Mammary epithelial cell (primary cell): ENCODE measurements at regions of chr12 and their contacts with region 1.

Region 1: DNA sequence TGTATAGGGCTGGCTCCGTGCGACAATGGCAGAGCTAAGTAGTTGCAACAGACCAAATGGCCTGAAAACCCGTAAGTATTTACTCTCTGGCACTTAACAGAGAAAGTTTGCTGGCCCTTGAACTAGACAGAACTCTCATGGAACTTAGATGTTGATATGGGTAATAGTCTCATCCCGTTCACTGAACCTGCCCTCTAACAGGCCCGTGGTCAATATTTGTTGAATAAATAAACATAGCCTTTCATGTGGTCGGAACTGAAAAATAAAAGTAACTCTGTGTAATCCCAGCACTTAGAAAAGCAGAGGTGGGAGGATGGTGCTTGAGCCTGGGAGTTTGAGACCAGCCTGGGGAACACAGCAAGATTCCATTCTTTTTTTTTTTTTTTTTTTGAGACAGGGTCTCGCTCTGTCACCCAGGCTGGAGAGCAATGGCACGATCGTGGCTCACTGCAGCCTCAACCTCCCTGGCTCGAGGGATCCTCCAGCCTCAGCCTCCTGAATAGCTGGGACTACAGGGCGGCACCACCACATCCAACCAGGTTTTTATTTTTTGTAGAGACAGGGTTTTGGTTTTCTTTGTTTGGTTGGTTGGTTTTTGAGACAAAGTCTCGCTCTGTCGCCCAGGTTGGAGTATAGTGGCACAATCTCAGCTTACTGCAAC is 29.7 kb downstream of the KDM2B start:
- DNase-seq: no peak
- H3K4me3 ChIP-seq: no peak overlapping the region
- H3K27ac ChIP-seq: no peak overlapping the region
- H3K4me1 ChIP-seq: no peaks in the 10 kb centered on the region
- H3K27me3 ChIP-seq: no peaks in the 10 kb centered on the region
- CTCF ChIP-seq: no peak

Region 2: GRCh38 chr12:121626087-121626852 is 75.2 kb after region 1 on chr12 and contains the start of gene ORAI1:
- CTCF ChIA-PET with region 1: interaction called, 4 read pairs
- dilution Hi-C with region 1: no loop called
- in situ Hi-C with region 1: no loop called
- intact Hi-C with region 1: loop called (anchors 1 kb)
- DNase-seq: peak; percentile 87
- H3K4me3 ChIP-seq: peak within 1 kb of the TSS; percentile 51 to 70 (median 58)
- H3K27ac ChIP-seq: peak within 1 kb of the TSS; percentile 66
- H3K4me1 ChIP-seq: peaks cover 21% of the 10 kb centered on the region
- H3K27me3 ChIP-seq: no peaks in the 10 kb centered on the region
- CTCF ChIP-seq: no peak
- total RNA-seq, gene ORAI1: 3.3 to 23.1 TPM

Region 3: DNA sequence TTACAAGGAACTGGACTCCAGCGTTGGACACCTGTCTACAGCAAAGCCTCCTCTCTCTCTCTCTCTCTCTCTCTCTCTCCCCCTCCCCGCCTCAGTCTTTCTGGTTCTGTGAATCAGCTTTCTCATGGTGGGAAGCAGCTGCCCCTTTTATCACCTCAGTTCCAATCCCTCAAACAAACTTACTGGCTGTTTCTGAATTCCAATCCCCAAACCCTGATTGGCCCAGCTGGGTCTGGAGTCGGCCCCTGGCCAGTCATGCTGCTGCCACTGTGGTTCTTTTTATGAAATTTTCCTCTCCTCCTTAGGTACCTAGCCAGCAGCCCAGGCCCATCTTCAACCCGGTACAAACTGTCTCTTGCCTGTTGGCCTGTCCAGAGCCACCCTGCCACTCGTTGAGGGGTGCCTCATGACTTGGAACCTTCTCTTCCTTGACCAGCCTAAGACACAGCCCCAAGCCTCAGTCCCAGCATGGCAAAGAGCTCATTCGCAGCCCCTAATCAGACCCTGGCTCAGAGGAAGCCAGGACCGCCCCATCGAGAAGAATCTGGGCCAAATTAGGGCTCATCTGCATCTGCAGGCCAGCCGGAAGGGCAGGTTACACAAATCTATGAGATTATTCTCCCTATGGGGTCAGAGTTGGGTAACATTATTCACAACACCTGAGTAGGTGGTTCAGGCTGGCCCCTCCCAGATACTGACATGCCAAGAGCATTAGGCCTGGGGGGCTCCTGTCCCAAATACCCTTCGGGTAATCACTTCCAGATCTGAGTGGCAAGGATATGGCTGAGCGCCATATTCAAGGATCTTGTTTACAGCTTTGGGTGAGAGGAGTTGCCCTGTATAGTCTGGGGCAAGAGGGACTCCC is 127.8 kb after region 1 on chr12:
- CTCF ChIA-PET with region 1: interaction called, 5 read pairs
- dilution Hi-C with region 1: no loop called
- in situ Hi-C with region 1: loop called (anchors 5 kb)
- intact Hi-C with region 1: loop called (anchors 1 kb)
- DNase-seq: no peak
- H3K4me3 ChIP-seq: no peak overlapping the region
- H3K27ac ChIP-seq: no peak overlapping the region
- H3K4me1 ChIP-seq: no peaks in the 10 kb centered on the region
- H3K27me3 ChIP-seq: no peaks in the 10 kb centered on the region
- CTCF ChIP-seq: no peak

Region 4: DNA sequence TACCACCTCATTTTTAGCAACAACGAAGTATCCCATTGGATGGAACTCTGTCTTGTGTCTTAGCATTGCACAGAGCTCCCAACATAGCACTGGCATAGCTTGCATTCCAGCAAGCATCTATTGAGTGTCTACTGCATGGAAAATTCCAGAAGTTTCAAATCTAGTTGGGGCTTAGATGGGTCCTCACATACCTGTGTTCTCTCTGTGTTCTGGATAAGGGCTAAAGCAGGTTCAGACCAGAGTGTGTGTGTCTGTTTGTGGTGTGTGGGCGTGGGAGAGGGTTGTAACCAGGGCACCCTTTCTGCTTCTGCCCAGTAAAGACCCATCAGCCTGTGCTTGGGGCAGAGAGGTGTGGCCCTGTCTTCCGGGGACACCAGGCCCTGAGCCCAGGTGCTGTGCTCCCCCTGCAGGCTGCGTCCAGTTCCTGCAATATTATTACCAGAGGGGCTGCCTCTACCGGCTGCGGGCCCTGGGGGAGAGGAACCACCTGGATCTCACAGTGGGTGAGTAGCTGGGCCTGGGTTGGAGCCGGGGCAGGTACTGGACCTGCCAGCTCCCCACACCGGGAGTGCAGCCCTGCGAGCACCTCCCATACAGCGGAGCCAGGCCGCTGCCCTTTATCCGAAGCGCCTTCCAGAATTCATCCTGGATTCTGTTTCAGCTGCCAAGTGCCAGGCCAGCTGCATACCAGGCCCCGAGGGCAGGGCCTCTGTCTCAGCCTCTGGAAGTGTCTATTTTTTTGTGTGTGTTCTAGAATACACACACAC is 222.1 kb after region 1 on chr12:
- CTCF ChIA-PET with region 1: no interaction called
- dilution Hi-C with region 1: no loop called
- in situ Hi-C with region 1: no loop called
- intact Hi-C with region 1: loop called (anchors 1 kb)
- DNase-seq: peak; percentile 64
- H3K4me3 ChIP-seq: no peak overlapping the region
- H3K27ac ChIP-seq: no peak overlapping the region
- H3K4me1 ChIP-seq: peaks cover 10% of the 10 kb centered on the region
- H3K27me3 ChIP-seq: no peaks in the 10 kb centered on the region
- CTCF ChIP-seq: peak; percentile 77 to 95